H1 (cell line): ENCODE measurements at regions of chr14 and their contacts with region 1.

Region 1: DNA sequence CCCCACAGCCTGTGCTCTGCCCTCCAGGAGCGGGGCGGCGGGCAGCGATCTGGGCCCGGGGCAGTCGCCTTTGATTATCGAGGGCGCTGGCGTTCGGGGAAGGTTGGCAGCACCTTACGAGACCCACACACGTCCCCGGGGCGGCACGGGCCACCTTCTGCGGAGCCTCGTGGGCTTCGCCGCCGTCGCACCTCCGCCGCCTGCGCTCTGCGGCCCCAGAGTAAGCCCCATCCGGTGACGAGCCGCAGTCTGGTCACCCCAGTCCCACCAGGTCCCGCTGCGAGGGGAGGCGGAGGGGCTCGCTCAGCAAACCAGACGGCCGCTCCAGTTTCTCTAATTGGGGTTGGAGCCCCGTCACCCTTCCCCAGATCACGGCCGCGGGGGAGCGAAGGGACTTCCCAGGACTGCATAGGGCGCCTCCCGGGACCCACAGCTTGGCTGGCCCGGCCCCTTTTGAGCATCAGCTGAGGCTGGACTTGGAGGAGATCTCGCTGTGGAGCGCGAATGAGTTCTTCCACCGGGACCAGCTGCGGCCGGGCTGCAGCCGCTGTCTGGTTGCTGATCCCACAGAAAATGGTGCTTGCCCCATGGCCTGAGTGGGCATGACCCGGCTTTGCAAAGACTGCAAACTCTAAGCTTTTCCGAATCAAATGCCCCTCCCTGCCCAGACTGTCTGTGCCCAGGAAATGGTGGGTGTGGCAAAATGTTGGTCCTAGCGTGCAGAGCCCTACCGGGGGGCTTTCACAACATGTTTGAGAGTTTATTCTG is 560 bp downstream of the LGALS3 start:
- DNase-seq: peak in 1 of 2 experiments; percentile 78
- H3K4me3 ChIP-seq: peak overlapping the region; percentile 53 to 74 (median 62)
- H3K27ac ChIP-seq: no peak overlapping the region
- H3K4me1 ChIP-seq: peaks cover 0 to 3% (median 1%) of the 10 kb centered on the region in 4 experiments; a peak in 2 of 7 replicates
- H3K27me3 ChIP-seq: peaks cover 0 to 30% (median 17%) of the 10 kb centered on the region in 4 experiments; a peak in 6 of 7 replicates
- CTCF ChIP-seq: no peak
- EP300 ChIP-seq: no peak
- POLR2A ChIP-seq: peak in 1 of 2 experiments; percentile 12; a peak in 1 of 3 replicates
- RAD21 ChIP-seq: no peak

Region 2: DNA sequence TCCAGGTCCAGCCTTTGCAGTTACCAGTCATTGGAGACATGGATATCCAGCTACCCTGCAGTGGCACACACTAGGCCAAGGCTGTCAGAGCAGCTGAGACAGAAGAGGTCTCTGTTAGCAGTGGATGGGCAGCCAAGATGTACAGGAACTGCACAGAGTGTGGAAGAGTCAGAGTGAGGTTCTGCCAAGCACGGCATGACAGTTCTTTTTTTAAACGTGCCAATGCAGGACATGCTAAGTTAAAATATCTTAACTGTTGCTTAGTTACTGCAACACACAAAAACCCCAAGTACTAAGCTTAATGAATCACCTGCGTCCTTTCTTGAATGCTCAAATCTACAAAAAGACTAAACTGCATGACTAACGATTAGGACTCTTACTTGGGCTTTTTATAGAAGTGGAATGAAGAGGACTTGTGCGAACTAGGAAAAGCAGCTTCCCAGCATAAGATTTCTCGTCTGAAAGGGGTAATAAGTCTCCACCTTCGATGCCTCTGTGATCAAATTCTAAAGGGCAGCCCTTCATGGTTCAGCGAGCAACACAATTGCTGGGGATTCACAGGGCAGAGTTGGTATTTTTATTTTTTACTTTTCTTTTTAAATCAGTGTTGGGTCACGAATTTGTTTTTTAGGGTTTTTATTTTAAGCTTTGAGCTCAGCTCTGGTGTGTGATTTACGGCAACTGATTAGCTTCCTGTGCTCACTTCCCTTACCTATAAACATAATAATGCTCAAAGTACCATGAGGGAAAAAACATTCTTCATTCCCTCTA is 57.6 kb before region 1 on chr14:
- CTCF ChIA-PET with region 1: interaction called, 3 read pairs
- POLR2A ChIA-PET with region 1: interaction called, 11 read pairs
- DNase-seq: no peak
- H3K4me3 ChIP-seq: no peak overlapping the region
- H3K27ac ChIP-seq: no peak overlapping the region
- H3K4me1 ChIP-seq: peaks cover 0 to 4% (median 1%) of the 10 kb centered on the region in 4 experiments; a peak in 4 of 7 replicates
- H3K27me3 ChIP-seq: peaks cover 0 to 1% (median 0%) of the 10 kb centered on the region in 4 experiments; a peak in 1 of 7 replicates
- CTCF ChIP-seq: no peak
- EP300 ChIP-seq: no peak
- POLR2A ChIP-seq: no peak
- RAD21 ChIP-seq: no peak

Region 3: DNA sequence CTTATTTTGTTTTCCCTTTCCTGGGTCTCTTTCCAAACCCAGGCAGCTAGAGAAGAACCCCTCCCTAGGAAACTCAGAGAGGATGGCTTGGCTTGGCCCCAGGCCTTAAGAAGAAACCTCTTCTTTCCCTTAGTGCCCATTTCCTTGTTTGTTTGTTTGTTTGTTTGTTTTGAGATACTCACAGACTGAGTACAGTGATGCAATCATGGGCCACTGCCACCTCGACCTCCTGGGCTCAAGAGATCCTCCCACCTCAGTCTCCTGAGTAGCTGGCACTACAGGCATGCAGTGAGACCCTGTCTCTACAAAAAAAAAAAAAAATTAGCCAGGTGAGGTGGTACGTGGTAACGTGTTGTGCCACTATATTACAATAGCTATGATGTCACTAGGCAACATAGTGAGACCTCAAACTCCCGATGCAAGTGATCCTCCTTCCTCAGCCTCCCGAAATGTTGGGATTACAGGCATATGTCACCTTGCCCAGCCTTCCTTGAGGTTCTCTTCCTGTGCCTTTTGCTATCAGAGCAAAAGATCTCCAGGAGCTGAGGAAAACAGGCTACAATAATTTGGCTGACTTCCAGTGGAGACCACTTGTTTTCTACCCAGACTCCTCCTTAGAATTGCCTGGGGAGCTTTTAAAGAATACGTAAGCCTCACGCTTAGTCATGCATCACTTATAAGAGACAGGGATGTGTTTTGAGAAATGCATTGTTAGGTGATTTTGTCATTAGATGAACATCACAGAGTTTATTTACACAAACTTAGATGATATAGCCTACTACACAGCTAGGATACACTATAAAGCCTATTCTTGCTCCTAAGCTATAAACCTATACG is 35.1 kb before region 1 on chr14:
- CTCF ChIA-PET with region 1: interaction called, 11 read pairs
- POLR2A ChIA-PET with region 1: interaction called, 4 read pairs
- DNase-seq: no peak
- H3K4me3 ChIP-seq: no peak overlapping the region
- H3K27ac ChIP-seq: no peak overlapping the region
- H3K4me1 ChIP-seq: no peaks in the 10 kb centered on the region
- H3K27me3 ChIP-seq: no peaks in the 10 kb centered on the region
- CTCF ChIP-seq: no peak
- EP300 ChIP-seq: no peak
- POLR2A ChIP-seq: no peak
- RAD21 ChIP-seq: no peak

Region 4: GRCh38 chr14:55102141-55102621 is 27.4 kb before region 1 on chr14:
- CTCF ChIA-PET with region 1: interaction called, 4 read pairs
- POLR2A ChIA-PET with region 1: interaction called, 10 read pairs
- DNase-seq: peak in 1 of 2 experiments; percentile 49
- H3K4me3 ChIP-seq: peak overlapping the region in 1 of 4 experiments; percentile 34; a peak in 2 of 8 replicates
- H3K27ac ChIP-seq: no peak overlapping the region
- H3K4me1 ChIP-seq: peaks cover 7 to 19% (median 12%) of the 10 kb centered on the region in 4 experiments; a peak in 5 of 7 replicates
- H3K27me3 ChIP-seq: no peaks in the 10 kb centered on the region
- CTCF ChIP-seq: no peak
- EP300 ChIP-seq: no peak
- POLR2A ChIP-seq: peak in 1 of 2 experiments; percentile 49; a peak in 1 of 3 replicates
- RAD21 ChIP-seq: no peak

Region 5: DNA sequence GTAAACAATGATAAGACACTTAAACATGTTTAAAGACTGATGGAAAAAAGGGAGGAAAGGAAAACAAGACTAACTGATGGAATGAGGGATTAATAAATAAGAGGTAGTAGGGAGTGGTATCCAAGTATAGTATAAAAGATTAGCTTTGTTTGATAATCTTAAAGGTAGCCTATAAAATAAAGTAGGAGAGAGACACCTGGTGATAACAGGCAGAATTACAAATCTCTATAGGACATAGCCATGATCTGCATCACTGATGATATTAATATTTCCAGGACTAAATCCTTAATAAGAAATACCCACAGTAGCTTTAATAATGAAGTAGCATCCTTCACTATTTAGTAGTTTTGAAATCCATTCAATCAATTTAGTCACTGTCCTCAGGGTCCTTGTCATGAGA is 31.4 kb after region 1 on chr14:
- CTCF ChIA-PET with region 1: no interaction called
- POLR2A ChIA-PET with region 1: no interaction called
- DNase-seq: no peak
- H3K4me3 ChIP-seq: no peak overlapping the region
- H3K27ac ChIP-seq: no peak overlapping the region
- H3K4me1 ChIP-seq: no peaks in the 10 kb centered on the region
- H3K27me3 ChIP-seq: no peaks in the 10 kb centered on the region
- CTCF ChIP-seq: no peak
- EP300 ChIP-seq: no peak
- POLR2A ChIP-seq: no peak
- RAD21 ChIP-seq: peak in 1 of 2 experiments; percentile 18; a peak in 1 of 4 replicates